PC-9 (cell line): ENCODE measurements at regions of chr11 and their contacts with region 1.

Region 1: DNA sequence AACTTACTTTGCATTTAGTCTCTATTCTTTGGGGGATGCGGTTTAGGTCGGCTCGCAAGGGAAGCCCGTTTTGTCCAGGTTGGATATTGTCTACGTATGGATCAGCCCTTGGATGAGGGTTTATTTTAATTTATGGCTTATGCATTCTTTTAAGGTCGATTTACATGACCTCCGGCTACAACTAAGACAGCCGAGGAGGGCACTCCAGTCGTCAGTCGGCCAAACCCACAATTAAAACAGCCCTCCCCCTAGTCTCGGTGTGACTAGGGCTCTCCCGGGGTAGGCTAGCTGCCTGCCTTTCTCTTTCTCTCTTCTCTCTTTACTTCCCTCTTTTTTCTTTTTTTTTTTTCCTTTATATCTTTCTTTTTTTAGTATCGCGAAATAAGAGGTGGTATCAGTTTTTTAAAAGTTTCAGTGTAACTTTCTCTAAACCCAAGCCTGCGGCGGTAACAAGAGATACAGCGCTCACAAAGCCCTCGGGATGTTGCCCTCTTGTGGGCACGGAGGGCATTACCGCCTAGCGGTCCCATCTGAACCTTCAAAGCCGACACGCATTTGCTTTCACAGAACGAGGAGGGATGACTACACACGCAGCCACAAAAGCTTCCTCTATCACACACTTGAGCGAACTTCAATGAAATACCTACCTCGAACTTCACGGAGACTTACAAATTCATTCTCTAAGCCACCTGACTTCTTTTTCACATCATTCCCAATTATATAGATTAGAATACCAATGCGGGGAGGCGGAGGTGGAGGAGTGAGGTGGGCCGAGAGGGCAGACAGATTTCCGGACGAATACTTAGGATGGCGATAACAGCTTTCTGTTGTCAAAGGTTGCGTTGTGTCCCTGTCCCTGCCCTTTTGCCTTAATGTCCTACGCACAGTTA is 132.3 kb upstream of the C11orf58 start:
- DNase-seq: peak; percentile 78 to 86
- H3K4me3 ChIP-seq: peak overlapping the region; percentile 93
- H3K27ac ChIP-seq: peak overlapping the region; percentile 49
- H3K4me1 ChIP-seq: no peaks in the 10 kb centered on the region
- H3K27me3 ChIP-seq: no peaks in the 10 kb centered on the region
- CTCF ChIP-seq: peak; percentile 91

Region 2: DNA sequence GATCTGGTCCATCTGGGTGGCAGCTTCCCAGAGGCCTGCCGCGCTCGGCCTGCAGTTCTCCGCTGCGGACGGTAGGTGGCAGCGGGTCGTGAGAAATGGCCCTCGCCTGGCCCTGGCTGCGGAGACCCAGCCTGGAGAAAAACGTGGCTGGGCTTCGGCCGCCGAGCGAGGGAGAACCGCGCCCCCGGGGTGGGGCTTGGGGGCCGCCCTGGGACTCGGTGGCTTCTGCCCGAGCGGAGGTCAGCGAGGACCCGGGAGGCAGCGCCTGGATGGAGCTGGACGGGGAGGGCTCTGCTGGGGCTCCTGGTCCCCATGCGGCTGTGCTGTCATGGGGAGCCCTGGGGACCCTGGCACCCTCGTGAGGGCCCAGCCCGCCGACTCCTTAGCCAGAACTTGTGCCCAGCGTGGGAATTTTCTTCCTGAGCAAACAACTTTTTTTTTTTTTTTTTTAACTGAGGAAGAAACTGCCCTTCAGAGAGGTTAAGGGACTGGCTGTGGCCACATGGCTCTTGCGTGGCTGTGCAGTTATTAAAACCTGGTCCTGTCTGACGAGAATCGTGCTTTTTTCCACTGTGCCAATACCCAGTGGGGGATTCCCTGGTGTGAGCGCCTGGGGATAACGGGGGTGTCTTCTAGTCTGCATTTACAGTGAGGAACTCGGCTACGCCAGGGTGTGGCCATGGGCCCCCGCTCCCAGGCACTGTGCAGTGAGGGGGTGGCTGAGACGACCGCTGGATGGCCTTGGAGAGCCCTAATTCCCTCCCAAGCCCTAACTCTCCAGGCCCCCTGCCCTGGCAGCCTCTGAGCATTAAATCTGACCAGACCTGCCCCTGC is 955.8 kb before region 1 on chr11:
- CTCF ChIA-PET with region 1: no interaction called
- POLR2A ChIA-PET with region 1: no interaction called
- intact Hi-C with region 1: loop called (anchors 1 kb)
- DNase-seq: peak; percentile 77 to 92
- H3K4me3 ChIP-seq: peak overlapping the region; percentile 52; the same call in 1 of the 2 replicates
- H3K27ac ChIP-seq: peak overlapping the region; percentile 88
- H3K4me1 ChIP-seq: peaks cover 50% of the 10 kb centered on the region
- H3K27me3 ChIP-seq: no peaks in the 10 kb centered on the region
- CTCF ChIP-seq: peak; percentile 90

Region 3: GRCh38 chr11:15819679-15820286 is 786.4 kb before region 1 on chr11:
- CTCF ChIA-PET with region 1: no interaction called
- POLR2A ChIA-PET with region 1: interaction called, 3 read pairs
- intact Hi-C with region 1: loop called (anchors 5 kb)
- DNase-seq: no peak
- H3K4me3 ChIP-seq: no peak overlapping the region
- H3K27ac ChIP-seq: no peak overlapping the region
- H3K4me1 ChIP-seq: peaks cover 31% of the 10 kb centered on the region
- H3K27me3 ChIP-seq: no peaks in the 10 kb centered on the region
- CTCF ChIP-seq: no peak; the same call in 1 of the 2 replicates

Region 4: GRCh38 chr11:15893080-15893492 is 713.1 kb before region 1 on chr11:
- CTCF ChIA-PET with region 1: no interaction called
- POLR2A ChIA-PET with region 1: no interaction called
- intact Hi-C with region 1: loop called (anchors 2 kb)
- DNase-seq: peak; percentile 58 to 87
- H3K4me3 ChIP-seq: no peak overlapping the region
- H3K27ac ChIP-seq: peak overlapping the region; percentile 44
- H3K4me1 ChIP-seq: peaks cover 29% of the 10 kb centered on the region
- H3K27me3 ChIP-seq: no peaks in the 10 kb centered on the region
- CTCF ChIP-seq: no peak

Region 5: DNA sequence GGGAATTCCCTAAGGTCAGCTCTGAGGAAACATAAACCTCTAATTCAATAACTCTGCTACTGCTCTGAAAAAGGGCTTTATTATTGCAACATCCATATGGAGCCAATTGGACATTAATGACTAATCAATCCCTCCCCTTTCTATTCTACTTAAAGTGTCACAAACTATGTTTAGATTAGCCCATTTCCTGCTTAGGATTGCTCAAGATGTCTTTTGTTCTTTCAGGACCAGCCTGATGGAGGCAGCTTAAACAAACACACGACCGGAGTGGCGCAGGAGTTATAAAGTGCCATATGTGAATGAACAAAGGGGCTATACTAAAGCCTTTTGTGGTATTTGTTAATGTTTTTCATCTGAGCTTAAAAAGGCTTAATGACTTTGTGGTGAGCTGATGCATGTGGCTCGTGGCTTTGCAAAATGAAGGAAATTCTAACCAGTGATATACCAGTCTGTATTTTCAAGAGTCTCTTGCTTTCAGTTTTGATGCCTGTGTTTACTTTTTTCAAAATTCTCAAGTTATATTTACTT is 604.2 kb before region 1 on chr11:
- CTCF ChIA-PET with region 1: no interaction called
- POLR2A ChIA-PET with region 1: no interaction called
- intact Hi-C with region 1: loop called (anchors 10 kb)
- DNase-seq: peak; percentile 37 to 91
- H3K4me3 ChIP-seq: peak overlapping the region; percentile 8; the same call in 1 of the 2 replicates
- H3K27ac ChIP-seq: peak overlapping the region; percentile 66
- H3K4me1 ChIP-seq: peaks cover 16% of the 10 kb centered on the region
- H3K27me3 ChIP-seq: no peaks in the 10 kb centered on the region
- CTCF ChIP-seq: no peak

Region 6: DNA sequence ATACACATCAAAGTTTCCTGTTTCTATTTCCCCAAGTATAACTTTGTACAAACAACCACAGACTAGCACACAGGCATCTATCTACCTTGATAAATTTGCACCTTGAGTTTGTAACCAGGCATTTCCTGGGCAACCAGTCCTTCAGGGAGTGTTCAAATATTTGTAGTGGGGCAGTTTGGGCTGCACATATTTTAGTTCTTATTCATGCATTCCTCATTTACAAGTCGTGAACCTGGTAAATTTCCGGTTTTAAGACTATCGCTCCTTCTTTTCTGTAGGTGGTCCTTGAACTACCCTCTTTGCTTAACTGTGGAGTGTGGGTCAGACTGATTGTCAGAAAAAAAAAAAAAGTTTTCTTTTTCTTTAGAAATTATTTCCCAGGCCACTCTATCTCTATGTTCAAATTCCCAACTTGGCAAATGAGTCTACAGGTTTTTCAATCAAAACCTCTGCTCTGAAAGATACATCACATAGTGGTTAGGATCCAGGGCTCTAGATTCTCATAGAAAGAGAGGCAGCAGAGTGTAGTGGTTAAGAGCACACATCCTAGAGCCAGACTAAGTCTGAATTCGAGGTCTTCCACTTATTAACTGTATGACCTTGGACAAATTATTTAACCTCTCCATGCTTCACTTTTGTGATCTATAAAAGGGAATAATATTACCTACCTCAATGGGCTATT is 451.3 kb before region 1 on chr11:
- CTCF ChIA-PET with region 1: no interaction called
- POLR2A ChIA-PET with region 1: no interaction called
- intact Hi-C with region 1: loop called (anchors 5 kb)
- DNase-seq: peak; percentile 45 to 83
- H3K4me3 ChIP-seq: 0 out of 2 replicates have a peak overlapping the region, but pooled peaks have one; percentile 13
- H3K27ac ChIP-seq: peak overlapping the region; percentile 76
- H3K4me1 ChIP-seq: peaks cover 25% of the 10 kb centered on the region
- H3K27me3 ChIP-seq: no peaks in the 10 kb centered on the region
- CTCF ChIP-seq: no peak

Region 7: DNA sequence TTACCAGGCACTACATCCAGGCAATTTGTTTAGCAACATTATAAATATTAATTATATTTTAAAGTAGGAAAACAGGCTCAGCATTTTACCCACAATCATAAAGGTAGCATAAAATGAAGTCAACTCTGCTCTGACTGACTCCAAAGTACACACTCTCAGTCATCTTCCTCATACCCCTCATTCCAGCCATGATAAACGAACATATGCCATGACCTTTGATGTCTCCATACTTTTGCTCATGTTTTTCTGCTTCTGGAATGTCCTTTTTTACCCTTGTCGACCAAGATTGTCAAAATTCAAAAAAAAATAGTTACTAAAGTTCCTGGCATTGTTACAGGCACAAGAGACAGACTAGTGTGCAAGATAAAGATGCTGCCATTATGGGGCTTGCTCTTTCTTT is 172.1 kb before region 1 on chr11:
- CTCF ChIA-PET with region 1: no interaction called
- POLR2A ChIA-PET with region 1: no interaction called
- intact Hi-C with region 1: no loop called
- DNase-seq: no peak
- H3K4me3 ChIP-seq: no peak overlapping the region
- H3K27ac ChIP-seq: no peak overlapping the region
- H3K4me1 ChIP-seq: no peaks in the 10 kb centered on the region
- H3K27me3 ChIP-seq: no peaks in the 10 kb centered on the region
- CTCF ChIP-seq: no peak

Region 8: GRCh38 chr11:16632295-16633200 is 26.4 kb after region 1 on chr11:
- CTCF ChIA-PET with region 1: no interaction called
- POLR2A ChIA-PET with region 1: no interaction called
- intact Hi-C with region 1: no loop called
- DNase-seq: peak; percentile 28 to 73
- H3K4me3 ChIP-seq: no peak overlapping the region
- H3K27ac ChIP-seq: no peak overlapping the region
- H3K4me1 ChIP-seq: peaks cover 6% of the 10 kb centered on the region; the same call in 1 of the 2 replicates
- H3K27me3 ChIP-seq: no peaks in the 10 kb centered on the region
- CTCF ChIP-seq: peak; percentile 67

Region 9: DNA sequence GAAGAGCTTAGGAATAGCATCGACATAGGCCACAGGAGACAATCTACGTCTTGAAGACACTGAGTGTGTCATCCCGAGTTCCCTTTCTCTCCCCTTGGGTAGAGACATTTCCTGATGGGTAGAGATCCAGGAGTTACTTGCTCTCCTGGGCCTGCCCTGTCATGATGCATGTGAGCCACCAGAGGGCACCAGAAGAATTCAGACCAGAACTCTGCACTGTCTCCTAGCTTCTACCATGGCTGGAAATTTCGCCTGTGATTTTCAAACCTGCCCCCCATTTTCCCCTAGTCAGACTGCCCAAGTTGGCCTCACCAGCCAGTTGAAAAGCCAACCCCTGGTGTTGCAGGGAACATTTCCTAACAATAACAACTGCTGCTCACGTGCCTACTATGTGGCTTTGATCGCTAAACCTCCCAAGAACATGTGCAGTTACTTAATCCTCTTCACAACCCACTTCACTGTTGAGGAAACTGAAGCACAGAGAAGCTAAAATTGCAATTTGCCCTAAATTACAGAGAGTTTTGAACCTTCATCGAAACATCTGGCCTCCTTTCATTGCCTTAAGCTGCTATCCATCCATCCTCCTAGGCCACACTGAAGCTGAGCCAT is 179.5 kb after region 1 on chr11:
- CTCF ChIA-PET with region 1: no interaction called
- POLR2A ChIA-PET with region 1: no interaction called
- intact Hi-C with region 1: no loop called
- DNase-seq: peak; percentile 43 to 49
- H3K4me3 ChIP-seq: no peak overlapping the region
- H3K27ac ChIP-seq: no peak overlapping the region
- H3K4me1 ChIP-seq: peaks cover 35% of the 10 kb centered on the region
- H3K27me3 ChIP-seq: no peaks in the 10 kb centered on the region
- CTCF ChIP-seq: peak; percentile 74